T-cell (primary cell): ENCODE measurements at regions of chr5 and their contacts with region 1.

Region 1: DNA sequence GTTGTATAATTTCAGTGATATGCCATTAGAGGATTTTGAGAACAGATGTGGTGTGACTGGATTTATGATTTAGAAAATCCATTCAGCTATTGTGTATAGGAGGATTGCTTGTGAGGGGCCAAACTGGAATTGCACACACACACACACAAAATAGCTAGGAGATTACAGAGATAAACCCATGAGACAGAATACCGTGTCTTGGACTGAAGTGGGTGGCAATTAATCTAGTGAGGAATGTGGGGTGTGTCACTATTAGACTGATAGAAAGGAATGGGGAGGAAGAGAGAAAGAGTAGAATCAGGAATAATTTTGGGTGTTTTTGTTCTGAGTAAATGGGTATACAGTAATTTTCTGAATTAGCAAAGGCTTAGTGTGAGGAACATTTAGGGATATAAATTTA is 274.4 kb upstream of the DAB2 start:
- DNase-seq: no peak
- ATAC-seq: no peak
- H3K4me3 ChIP-seq: no peak overlapping the region
- H3K4me3 Mint-ChIP-seq: no peak overlapping the region
- H3K27ac ChIP-seq: no peak overlapping the region
- H3K27ac Mint-ChIP-seq: no peak overlapping the region
- H3K4me1 ChIP-seq: no peaks in the 10 kb centered on the region
- H3K4me1 Mint-ChIP-seq: no peaks in the 10 kb centered on the region
- H3K27me3 ChIP-seq: peaks cover 3 to 4% of the 10 kb centered on the region in 2 experiments
- H3K27me3 Mint-ChIP-seq: peaks cover 0 to 7% of the 10 kb centered on the region in 2 donors

Region 2: GRCh38 chr5:39447059-39447458 is 252.1 kb before region 1 on chr5:
- CTCF ChIA-PET with region 1: no interaction called
- POLR2A ChIA-PET with region 1: no interaction called
- DNase-seq: no peak
- ATAC-seq: no peak
- H3K4me3 ChIP-seq: no peak overlapping the region
- H3K4me3 Mint-ChIP-seq: no peak overlapping the region
- H3K27ac ChIP-seq: no peak overlapping the region
- H3K27ac Mint-ChIP-seq: no peak overlapping the region
- H3K4me1 ChIP-seq: no peaks in the 10 kb centered on the region
- H3K4me1 Mint-ChIP-seq: no peaks in the 10 kb centered on the region
- H3K27me3 ChIP-seq: no peaks in the 10 kb centered on the region
- H3K27me3 Mint-ChIP-seq: peaks cover 0 to 8% of the 10 kb centered on the region in 2 donors

Region 3: DNA sequence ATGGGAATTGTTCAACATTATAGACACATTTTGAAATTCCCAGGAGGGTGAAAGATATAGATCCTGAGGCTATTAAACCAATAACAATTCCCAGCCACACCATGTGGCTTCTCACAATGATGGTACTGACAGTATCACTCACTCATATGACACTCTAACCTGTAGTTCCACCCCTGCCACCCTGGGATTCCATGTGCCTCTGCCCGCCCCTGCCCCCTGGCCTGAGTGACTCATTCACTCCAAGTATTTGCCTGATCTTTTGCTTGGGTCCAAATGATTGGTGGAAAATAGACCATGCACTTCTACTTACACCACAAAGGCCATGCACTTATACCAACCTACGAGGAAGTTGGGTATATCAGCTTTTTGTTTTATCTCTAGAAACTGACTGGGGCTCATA is 30.9 kb after region 1 on chr5:
- CTCF ChIA-PET with region 1: no interaction called
- POLR2A ChIA-PET with region 1: interaction called in 1 of 2 experiments, 13 read pairs
- DNase-seq: no peak
- ATAC-seq: no peak
- H3K4me3 ChIP-seq: no peak overlapping the region
- H3K4me3 Mint-ChIP-seq: no peak overlapping the region
- H3K27ac ChIP-seq: no peak overlapping the region
- H3K27ac Mint-ChIP-seq: no peak overlapping the region
- H3K4me1 ChIP-seq: no peaks in the 10 kb centered on the region
- H3K4me1 Mint-ChIP-seq: no peaks in the 10 kb centered on the region
- H3K27me3 ChIP-seq: no peaks in the 10 kb centered on the region
- H3K27me3 Mint-ChIP-seq: peaks cover 0 to 19% of the 10 kb centered on the region in 2 donors

Region 4: GRCh38 chr5:39775458-39776365 is 76.6 kb after region 1 on chr5:
- CTCF ChIA-PET with region 1: no interaction called
- POLR2A ChIA-PET with region 1: no interaction called
- DNase-seq: no peak
- ATAC-seq: no peak
- H3K4me3 ChIP-seq: no peak overlapping the region
- H3K4me3 Mint-ChIP-seq: no peak overlapping the region
- H3K27ac ChIP-seq: no peak overlapping the region
- H3K27ac Mint-ChIP-seq: no peak overlapping the region
- H3K4me1 ChIP-seq: no peaks in the 10 kb centered on the region
- H3K4me1 Mint-ChIP-seq: no peaks in the 10 kb centered on the region
- H3K27me3 ChIP-seq: peaks cover 0 to 4% of the 10 kb centered on the region in 2 experiments
- H3K27me3 Mint-ChIP-seq: peaks cover 17 to 19% of the 10 kb centered on the region in 2 donors